ENCODE measurements at regions of chr17 and their contacts with region 1.

Region 1: DNA sequence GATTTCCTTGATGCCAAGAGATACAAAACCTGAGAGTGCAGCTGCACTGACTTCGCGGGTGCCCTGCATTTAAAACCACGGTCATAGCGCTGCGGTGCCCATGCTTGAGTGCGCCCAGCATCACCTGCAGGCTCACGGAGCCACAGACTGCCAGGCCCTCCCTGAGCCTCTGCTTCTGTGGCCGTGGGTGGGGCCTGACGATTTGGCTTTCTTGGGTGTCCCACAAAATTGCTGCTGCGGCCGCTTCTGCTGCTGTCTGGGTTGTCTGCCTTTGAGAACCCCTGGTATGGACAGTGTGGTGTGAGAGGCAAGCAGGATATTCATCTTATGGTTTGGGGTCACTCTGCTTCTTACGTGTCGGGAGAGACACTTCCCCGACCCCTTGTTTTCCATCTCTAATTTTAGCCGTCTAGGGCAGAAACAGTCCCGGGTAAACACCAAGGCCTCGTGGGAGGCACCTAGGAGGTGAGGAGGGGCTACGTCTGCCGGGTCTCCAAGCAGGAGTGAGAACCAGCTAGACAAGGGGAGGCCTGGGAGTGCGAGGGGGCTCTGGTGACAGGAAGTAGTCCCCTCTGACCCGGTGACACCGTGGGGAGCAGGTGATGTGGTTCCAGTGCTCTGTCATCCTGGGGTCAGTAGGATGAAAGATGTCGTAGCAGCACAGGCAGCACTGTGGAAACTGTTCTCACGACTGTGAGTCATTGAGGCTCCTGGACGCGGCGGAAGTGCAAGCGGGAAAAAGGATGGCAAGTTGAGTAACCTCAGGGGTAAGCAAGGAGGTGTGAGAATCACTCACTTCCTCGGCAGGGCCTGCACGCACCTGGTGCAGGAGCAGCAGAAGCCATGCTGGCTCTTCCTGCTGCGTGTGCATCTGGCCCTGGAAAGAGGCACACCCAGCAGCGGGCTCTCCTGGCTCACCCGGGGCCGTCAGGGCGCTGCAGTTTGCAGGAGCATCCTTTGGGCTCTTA is 176.3 kb downstream of the RPTOR start:
- DNase-seq: peak; percentile 75
- H3K4me3 Mint-ChIP-seq: peak overlapping the region; percentile 58
- H3K27ac Mint-ChIP-seq: peak overlapping the region; percentile 91
- H3K4me1 Mint-ChIP-seq: peaks cover 60% of the 10 kb centered on the region
- H3K27me3 Mint-ChIP-seq: no peaks in the 10 kb centered on the region

Region 2: DNA sequence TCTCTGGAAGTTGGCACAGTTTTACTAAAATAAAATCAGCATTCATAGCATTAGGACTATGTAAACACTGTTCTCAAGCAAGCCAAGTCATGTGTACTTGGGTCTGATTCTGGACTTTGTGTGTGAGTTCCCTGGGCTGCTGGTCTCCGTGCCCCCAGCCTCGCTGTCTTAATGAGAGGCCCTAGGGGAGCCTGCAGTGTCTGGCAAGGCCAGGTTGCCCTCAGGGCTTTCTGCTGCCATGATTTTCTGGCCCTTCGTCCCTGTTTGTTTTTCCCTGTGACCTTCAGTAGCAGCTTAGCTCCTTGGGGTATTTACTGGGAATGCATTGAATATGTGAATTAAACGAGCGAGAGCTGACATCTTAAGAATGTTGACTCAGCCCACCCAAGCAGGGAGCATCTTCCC is 14.4 kb before region 1 on chr17:
- CTCF ChIA-PET with region 1: interaction called, 10 read pairs
- POLR2A ChIA-PET with region 1: no interaction called
- DNase-seq: no peak
- H3K4me3 Mint-ChIP-seq: no peak overlapping the region
- H3K27ac Mint-ChIP-seq: peak overlapping the region; percentile 63
- H3K4me1 Mint-ChIP-seq: peaks cover 85% of the 10 kb centered on the region
- H3K27me3 Mint-ChIP-seq: no peaks in the 10 kb centered on the region

Region 3: GRCh38 chr17:80737106-80738019 is 16.5 kb after region 1 on chr17:
- CTCF ChIA-PET with region 1: no interaction called
- POLR2A ChIA-PET with region 1: no interaction called
- DNase-seq: no peak
- H3K4me3 Mint-ChIP-seq: no peak overlapping the region
- H3K27ac Mint-ChIP-seq: no peak overlapping the region
- H3K4me1 Mint-ChIP-seq: peaks cover 79% of the 10 kb centered on the region
- H3K27me3 Mint-ChIP-seq: no peaks in the 10 kb centered on the region